IMR-90 (cell line): ENCODE measurements at regions of chr20 and their contacts with region 1.

Region 1: DNA sequence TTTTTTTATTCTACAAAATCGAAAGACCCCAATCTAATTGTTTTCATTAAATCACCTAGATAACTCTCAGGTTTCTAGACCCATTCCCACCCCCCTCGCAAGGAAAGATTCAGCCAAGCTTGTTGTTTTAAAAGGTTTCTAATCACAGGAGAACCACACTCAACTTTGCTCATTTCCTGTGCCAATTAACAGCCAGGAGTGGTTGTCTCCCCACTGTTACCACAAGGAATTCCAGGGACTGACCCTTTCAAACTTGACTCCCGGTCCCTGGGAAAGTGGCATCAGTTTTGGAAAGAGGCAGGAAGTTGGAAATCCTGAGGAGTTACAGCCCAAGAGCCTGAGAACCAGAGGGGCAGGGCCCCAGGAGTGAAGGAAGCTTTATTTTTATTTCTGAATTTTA is 561.3 kb upstream of the JAG1 start:
- DNase-seq: peak; percentile 79
- ATAC-seq: peak; percentile 57
- H3K4me3 ChIP-seq: no peak overlapping the region
- H3K27ac ChIP-seq: peak overlapping the region; percentile 39; the same call in 1 of the 2 replicates
- H3K4me1 ChIP-seq: peaks cover 5% of the 10 kb centered on the region
- H3K27me3 ChIP-seq: no peaks in the 10 kb centered on the region
- CTCF ChIP-seq: no peak
- POLR2A ChIP-seq: no peak
- RAD21 ChIP-seq: no peak

Region 2: GRCh38 chr20:11178946-11179654 is 56.0 kb before region 1 on chr20:
- CTCF ChIA-PET with region 1: no interaction called
- POLR2A ChIA-PET with region 1: no interaction called
- dilution Hi-C with region 1: no loop called
- in situ Hi-C with region 1: no loop called
- intact Hi-C with region 1: no loop called
- DNase-seq: peak; percentile 88
- ATAC-seq: peak; percentile 86
- H3K4me3 ChIP-seq: no peak overlapping the region
- H3K27ac ChIP-seq: no peak overlapping the region
- H3K4me1 ChIP-seq: peaks cover 2% of the 10 kb centered on the region; the same call in 1 of the 2 replicates
- H3K27me3 ChIP-seq: no peaks in the 10 kb centered on the region
- CTCF ChIP-seq: no peak
- POLR2A ChIP-seq: no peak
- RAD21 ChIP-seq: no peak

Region 3: GRCh38 chr20:11529047-11529446 is 294.0 kb after region 1 on chr20:
- CTCF ChIA-PET with region 1: interaction called, 10 read pairs
- POLR2A ChIA-PET with region 1: no interaction called
- dilution Hi-C with region 1: no loop called
- in situ Hi-C with region 1: no loop called
- intact Hi-C with region 1: no loop called
- DNase-seq: no peak
- ATAC-seq: no peak
- H3K4me3 ChIP-seq: no peak overlapping the region
- H3K27ac ChIP-seq: no peak overlapping the region
- H3K4me1 ChIP-seq: no peaks in the 10 kb centered on the region
- H3K27me3 ChIP-seq: no peaks in the 10 kb centered on the region
- CTCF ChIP-seq: no peak
- POLR2A ChIP-seq: no peak
- RAD21 ChIP-seq: no peak